Activated T-helper 1 cell treated with anti-CD3 and anti-CD28 coated beads, Interleukin-12 subunit alpha, Interleukin-12 subunit beta, Interleukin-2, Interleukin-4 antibody, amounts not matched to agents 30 ng/mL and 10 ng/mL and 1 ng/mL, durations not matched to agents 14 hours and 24 hours and 36 hours (primary cell): ENCODE measurements at regions of chr11 and their contacts with region 1.

Region 1: DNA sequence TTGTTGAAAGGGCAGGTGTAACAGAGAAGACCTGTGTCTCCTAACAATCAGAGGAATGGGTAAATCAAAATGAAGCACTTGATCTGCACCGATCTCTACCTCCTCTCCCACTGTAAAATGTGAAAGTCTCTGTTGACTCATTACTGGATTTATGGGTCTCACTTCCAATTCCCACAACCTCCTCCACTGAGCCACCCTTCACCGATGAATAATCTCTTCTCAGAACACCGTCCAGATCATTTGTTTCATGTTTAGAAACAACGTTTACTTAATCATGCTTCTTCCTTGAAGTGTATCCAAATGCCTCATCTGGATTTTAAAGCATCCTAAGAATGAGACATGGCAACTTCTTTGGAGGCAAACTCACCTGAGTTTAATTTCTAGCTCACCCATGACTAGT is 643.6 kb downstream of the ETS1 start:
- DNase-seq: no peak
- H3K4me3 Mint-ChIP-seq: no peak overlapping the region
- H3K27ac Mint-ChIP-seq: no peak overlapping the region
- H3K4me1 Mint-ChIP-seq: peaks cover 10% of the 10 kb centered on the region
- H3K27me3 Mint-ChIP-seq: peaks cover 3% of the 10 kb centered on the region

Region 2: DNA sequence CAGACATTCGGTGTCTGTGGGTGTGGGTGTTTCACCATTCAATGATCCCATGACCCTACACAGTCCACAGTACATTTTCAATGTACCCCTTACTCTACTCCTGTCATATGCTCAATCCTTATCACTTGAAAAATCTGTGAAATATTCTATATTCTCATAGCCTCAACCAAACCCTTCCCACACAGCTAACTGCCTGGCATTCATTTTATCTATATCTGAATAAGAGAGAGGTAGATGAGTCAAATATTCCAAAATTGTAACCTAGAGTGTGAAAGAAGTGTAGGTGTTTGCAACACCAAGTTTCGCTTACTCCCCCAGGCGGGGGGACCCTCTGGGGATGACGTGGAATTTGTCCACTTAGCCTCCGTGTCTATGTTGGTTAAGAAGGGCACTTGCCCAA is 288.8 kb after region 1 on chr11:
- intact Hi-C with region 1: loop called (anchors 5 kb)
- DNase-seq: no peak
- H3K4me3 Mint-ChIP-seq: peak overlapping the region; percentile 58
- H3K27ac Mint-ChIP-seq: peak overlapping the region; percentile 85
- H3K4me1 Mint-ChIP-seq: peaks cover 58% of the 10 kb centered on the region
- H3K27me3 Mint-ChIP-seq: peaks cover 2% of the 10 kb centered on the region